ENCODE measurements at regions of chr2 and their contacts with region 1.

Region 1: DNA sequence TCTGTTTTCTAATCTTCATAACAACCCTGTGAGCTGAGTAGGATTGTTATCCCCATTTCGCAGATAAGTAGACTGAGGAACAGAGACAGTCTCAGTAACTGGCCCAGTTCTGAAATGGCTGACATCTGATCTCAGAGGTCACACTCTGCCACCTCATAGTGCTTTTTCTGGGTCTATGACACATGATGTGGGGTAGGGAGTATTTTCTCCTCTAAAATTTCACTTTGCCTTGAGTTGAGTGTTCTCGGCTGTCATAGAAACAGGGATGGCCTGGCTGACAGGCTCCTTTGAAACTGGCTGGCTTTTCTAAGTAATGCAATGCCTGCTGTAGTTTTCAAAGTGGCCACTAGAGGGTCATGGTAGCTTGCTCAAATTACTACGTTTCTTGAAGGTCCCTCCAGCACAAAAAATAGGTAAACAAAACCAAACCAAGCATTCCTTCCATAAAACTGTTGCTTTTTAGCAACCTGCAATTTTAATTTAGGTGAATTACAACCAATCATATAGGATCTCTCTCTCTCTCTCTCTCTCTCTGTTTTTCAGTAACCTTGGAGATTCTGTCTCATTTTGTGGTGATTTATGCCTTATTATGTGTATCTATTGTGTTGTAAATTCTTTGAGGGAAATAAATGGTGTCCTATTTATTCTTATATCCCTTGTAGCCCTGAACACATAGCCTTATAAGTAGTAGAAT is 84.2 kb upstream of the TTN start:
- DNase-seq: peak; percentile 37
- H3K4me3 ChIP-seq: no peak overlapping the region
- H3K27ac ChIP-seq: no peak overlapping the region
- H3K27me3 ChIP-seq: no peaks in the 10 kb centered on the region
- CTCF ChIP-seq: peak; percentile 98

Region 2: DNA sequence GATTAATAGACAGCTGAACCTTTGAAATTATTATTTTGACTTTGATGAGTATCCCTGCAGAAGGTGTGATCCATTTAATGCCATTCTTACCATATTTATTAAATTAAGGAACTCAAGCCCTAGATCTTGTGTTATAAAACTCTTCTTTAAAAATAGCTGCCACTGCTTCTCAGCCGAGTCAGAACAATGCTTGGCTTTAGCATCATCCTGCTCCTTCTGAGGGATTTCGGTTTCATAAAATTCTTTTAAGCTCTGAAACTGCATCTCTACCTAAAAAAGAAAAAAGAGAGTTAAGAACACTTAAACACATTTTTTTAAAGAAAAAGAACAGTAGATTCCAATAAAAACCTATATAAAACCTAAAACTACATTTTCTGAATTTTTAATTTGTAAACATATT is 13.5 kb before region 1 on chr2:
- CTCF ChIA-PET with region 1: interaction called, 51 read pairs
- POLR2A ChIA-PET with region 1: no interaction called
- DNase-seq: no peak
- H3K4me3 ChIP-seq: no peak overlapping the region
- H3K27ac ChIP-seq: no peak overlapping the region
- H3K27me3 ChIP-seq: no peaks in the 10 kb centered on the region
- CTCF ChIP-seq: no peak

Region 3: GRCh38 chr2:178914259-178914849 is 22.9 kb after region 1 on chr2:
- CTCF ChIA-PET with region 1: interaction called, 15 read pairs
- POLR2A ChIA-PET with region 1: no interaction called
- DNase-seq: peak; percentile 66
- H3K4me3 ChIP-seq: no peak overlapping the region
- H3K27ac ChIP-seq: no peak overlapping the region
- H3K27me3 ChIP-seq: no peaks in the 10 kb centered on the region
- CTCF ChIP-seq: peak; percentile 91